ENCODE measurements at regions of chrX and their contacts with region 1.

Region 1: DNA sequence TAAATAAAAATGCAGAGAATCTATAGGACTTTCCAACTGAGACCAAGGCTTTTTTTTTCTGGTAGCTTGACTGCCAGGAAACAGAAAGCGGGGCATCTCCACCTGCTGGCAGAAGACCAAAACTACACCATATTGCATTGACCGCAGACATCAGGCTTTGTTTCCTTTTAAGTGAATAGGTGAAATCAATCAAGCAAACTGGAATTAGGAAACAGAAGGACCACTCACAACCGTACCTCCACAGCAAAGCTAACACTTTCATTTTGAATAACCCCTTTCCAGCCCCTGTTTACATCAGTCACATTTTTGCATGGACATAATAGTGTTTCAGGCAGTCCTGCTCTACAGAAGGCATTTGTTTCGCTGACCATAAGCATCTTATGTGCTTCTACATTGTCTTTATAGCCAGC is 218.2 kb downstream of the IDS start:
- DNase-seq: peak in 1 of 2 experiments; percentile 39
- H3K4me3 ChIP-seq: no peak overlapping the region
- H3K27ac ChIP-seq: no peak overlapping the region
- H3K4me1 ChIP-seq: no peaks in the 10 kb centered on the region
- H3K27me3 ChIP-seq: no peaks in the 10 kb centered on the region
- CTCF ChIP-seq: peak; percentile 92

Region 2: DNA sequence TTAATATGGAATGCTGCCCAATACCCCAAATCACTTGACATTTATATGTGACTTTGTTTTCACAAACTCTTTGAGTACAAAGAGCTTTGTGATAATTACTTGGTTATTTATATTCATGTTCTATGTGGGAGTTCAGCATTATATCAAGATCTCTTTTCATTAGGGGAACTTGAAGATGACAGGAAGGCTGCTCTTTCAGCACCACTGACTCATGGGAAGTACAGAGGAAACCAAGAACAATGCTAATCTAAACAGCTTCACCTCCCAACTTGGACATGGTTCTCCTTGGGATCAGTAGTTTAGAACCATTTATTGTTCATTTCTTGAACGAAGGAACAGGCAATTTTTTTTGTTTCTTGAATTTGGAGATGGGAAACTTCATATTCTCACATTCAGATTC is 970.5 kb before region 1 on chrX:
- CTCF ChIA-PET with region 1: no interaction called
- POLR2A ChIA-PET with region 1: no interaction called
- intact Hi-C with region 1: no loop called
- DNase-seq: no peak
- H3K4me3 ChIP-seq: no peak overlapping the region
- H3K27ac ChIP-seq: no peak overlapping the region
- H3K4me1 ChIP-seq: no peaks in the 10 kb centered on the region
- H3K27me3 ChIP-seq: no peaks in the 10 kb centered on the region
- CTCF ChIP-seq: no peak

Region 3: GRCh38 chrX:149470955-149471354 is 184.0 kb after region 1 on chrX:
- CTCF ChIA-PET with region 1: no interaction called
- POLR2A ChIA-PET with region 1: no interaction called
- intact Hi-C with region 1: loop called (anchors 10 kb)
- DNase-seq: peak; percentile 60 to 85
- H3K4me3 ChIP-seq: no peak overlapping the region
- H3K27ac ChIP-seq: no peak overlapping the region
- H3K4me1 ChIP-seq: peaks cover 7% of the 10 kb centered on the region; the same call in 1 of the 2 replicates
- H3K27me3 ChIP-seq: peaks cover 36% of the 10 kb centered on the region
- CTCF ChIP-seq: peak; percentile 98

Measured in PC-9 (cell line).